ENCODE measurements at regions of chr22 and their contacts with region 1.

Region 1: DNA sequence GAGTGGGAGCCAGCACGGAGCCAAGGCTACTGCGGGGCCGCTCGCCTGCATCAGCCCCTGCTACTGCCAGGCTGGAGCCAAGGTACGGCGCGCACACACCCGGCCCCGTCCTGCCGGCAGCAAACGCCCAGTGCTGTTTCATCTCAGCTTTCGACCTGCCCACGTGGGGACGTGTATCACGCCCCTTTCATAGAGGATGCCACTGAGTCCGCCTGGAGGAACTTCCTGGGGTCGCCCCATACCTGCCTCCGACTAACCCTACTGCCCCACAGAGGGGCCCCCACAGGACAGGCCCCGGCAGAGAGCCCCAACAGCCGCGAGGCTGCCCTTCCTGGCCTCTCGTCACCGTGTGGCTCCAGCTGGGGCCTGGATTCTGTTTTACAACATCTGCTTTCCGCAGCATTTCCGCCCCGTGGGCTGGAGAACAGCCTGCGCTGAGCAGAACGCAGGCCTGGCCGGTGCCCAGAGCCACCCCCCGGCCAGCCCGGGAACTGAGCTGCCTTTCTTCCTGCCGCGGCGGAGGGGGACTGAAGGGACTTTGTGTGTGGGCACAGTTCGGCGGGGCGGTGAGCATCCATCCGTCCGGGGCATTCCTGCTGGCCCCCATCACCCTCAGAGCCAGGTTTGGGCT is 22.9 kb upstream of the ARHGAP8 start:
- DNase-seq: no peak
- H3K4me3 ChIP-seq: peak overlapping the region; percentile 0 to 37
- H3K27ac ChIP-seq: peak overlapping the region; percentile 57
- H3K4me1 ChIP-seq: peaks cover 28% of the 10 kb centered on the region
- H3K27me3 ChIP-seq: no peaks in the 10 kb centered on the region
- CTCF ChIP-seq: peak in 1 of 3 experiments; percentile 19
- POLR2A ChIP-seq: no peak

Region 2: GRCh38 chr22:44697423-44698141 is 31.9 kb before region 1 on chr22:
- intact Hi-C with region 1: loop called (anchors 5 kb)
- DNase-seq: no peak
- H3K4me3 ChIP-seq: no peak overlapping the region
- H3K27ac ChIP-seq: peak overlapping the region; percentile 95
- H3K4me1 ChIP-seq: peaks cover 49% of the 10 kb centered on the region
- H3K27me3 ChIP-seq: no peaks in the 10 kb centered on the region
- CTCF ChIP-seq: peak; percentile 88 to 92 (median 92)
- POLR2A ChIP-seq: no peak